Activated CD4-positive, alpha-beta T cell treated with anti-CD3 and anti-CD28 coated beads, Interleukin-2, amount 10 ng/mL, durations not matched to agents 24 days and 14 days (primary cell): ENCODE measurements at regions of chr7 and their contacts with region 1.

Region 1: GRCh38 chr7:3300651-3301378 is at the start of gene SDK1:
- DNase-seq: peak; percentile 97
- H3K4me3 Mint-ChIP-seq: peak within 1 kb of the TSS; percentile 62
- H3K27ac Mint-ChIP-seq: no peak within 1 kb of the TSS
- H3K4me1 Mint-ChIP-seq: peaks cover 12% of the 10 kb centered on the region
- H3K27me3 Mint-ChIP-seq: peaks cover 56% of the 10 kb centered on the region
- total RNA-seq, gene SDK1: 0.14 and 0.16 TPM in 2 replicates

Region 2: GRCh38 chr7:1624999-1625927 is 1675.6 kb before region 1 on chr7:
- intact Hi-C with region 1: no loop called
- DNase-seq: no peak
- H3K4me3 Mint-ChIP-seq: no peak overlapping the region
- H3K27ac Mint-ChIP-seq: no peak overlapping the region
- H3K4me1 Mint-ChIP-seq: no peaks in the 10 kb centered on the region
- H3K27me3 Mint-ChIP-seq: no peaks in the 10 kb centered on the region

Region 3: GRCh38 chr7:3282457-3282856 is 18.4 kb before region 1 on chr7:
- intact Hi-C with region 1: no loop called
- DNase-seq: no peak
- H3K4me3 Mint-ChIP-seq: no peak overlapping the region
- H3K27ac Mint-ChIP-seq: no peak overlapping the region
- H3K4me1 Mint-ChIP-seq: no peaks in the 10 kb centered on the region
- H3K27me3 Mint-ChIP-seq: peaks cover 3% of the 10 kb centered on the region

Region 4: DNA sequence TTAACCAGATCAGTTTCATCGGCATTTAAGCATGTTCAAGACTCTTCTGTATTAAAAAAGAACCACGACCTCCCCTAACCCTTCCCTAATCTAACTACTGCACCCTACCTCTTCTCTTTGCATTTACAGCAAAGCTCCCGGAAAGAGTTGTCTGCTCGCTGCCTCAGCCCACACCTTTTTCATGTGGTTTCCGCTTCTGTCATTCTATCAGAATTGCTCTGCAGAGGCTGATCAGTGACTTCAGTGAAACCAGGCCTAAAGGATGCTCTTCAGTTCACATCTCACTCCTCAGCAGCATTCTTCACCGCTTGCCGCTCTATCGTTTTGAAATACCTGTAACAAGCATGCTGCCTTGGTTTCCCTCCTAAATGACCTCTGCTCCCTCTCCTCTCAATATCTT is 161.1 kb after region 1 on chr7:
- intact Hi-C with region 1: loop called (anchors 5 kb)
- DNase-seq: peak; percentile 92
- H3K4me3 Mint-ChIP-seq: peak overlapping the region; percentile 76
- H3K27ac Mint-ChIP-seq: peak overlapping the region; percentile 81
- H3K4me1 Mint-ChIP-seq: peaks cover 27% of the 10 kb centered on the region
- H3K27me3 Mint-ChIP-seq: no peaks in the 10 kb centered on the region

Region 5: GRCh38 chr7:3673524-3673923 is 372.7 kb after region 1 on chr7:
- intact Hi-C with region 1: loop called (anchors 5 kb)
- DNase-seq: peak; percentile 80
- H3K4me3 Mint-ChIP-seq: no peak overlapping the region
- H3K27ac Mint-ChIP-seq: no peak overlapping the region
- H3K4me1 Mint-ChIP-seq: no peaks in the 10 kb centered on the region
- H3K27me3 Mint-ChIP-seq: no peaks in the 10 kb centered on the region

Region 6: DNA sequence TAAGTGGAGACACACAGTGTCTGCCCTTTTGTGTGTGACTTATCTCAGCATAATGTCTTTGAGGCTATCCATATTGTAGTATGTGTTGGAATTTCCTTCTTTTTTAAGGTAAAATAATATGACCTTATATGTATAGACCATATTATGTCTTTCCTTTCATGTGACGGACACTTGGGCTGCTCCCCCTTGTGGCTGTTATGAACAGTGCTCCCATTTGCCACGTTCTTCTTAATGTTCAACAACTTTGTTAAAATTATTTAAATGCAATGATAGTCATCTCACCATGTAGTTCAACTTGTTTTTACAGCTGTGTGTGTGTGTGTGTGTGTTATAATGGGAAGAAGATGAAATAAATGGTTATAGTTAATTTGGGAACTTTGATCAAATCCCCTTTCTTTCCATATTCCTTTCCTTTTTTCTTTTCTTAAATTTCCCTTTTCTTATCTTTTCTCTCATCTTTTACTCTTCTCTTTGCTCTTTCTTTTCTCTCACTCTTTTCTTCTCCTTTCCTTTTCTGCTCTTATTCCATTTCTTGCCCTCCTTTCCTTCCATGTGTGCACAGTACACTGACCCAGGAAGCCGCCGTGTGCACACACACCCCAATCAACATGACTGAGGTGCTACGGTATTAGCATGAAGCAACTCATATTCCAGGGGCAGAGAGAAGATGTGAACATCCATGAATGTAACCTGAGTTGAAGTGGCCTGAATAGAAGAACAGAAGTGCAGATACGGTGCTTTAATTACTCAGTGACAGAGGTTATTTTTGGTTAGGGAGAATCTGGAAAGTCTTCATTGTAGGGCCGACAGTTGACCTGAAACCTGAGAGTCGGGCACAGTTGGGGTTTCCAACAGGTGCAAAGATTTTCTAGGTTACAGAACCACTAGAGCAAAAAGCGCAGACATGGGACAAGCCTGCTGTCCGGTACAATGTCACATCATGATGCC is 596.9 kb after region 1 on chr7:
- intact Hi-C with region 1: loop called (anchors 1 kb)
- DNase-seq: peak; percentile 83
- H3K4me3 Mint-ChIP-seq: no peak overlapping the region
- H3K27ac Mint-ChIP-seq: no peak overlapping the region
- H3K4me1 Mint-ChIP-seq: no peaks in the 10 kb centered on the region
- H3K27me3 Mint-ChIP-seq: peaks cover 8% of the 10 kb centered on the region